Activated B cell treated with CpG ODN at 0.5 μM for 24 hours (primary cell): ENCODE measurements at regions of chr14 and their contacts with region 1.

Region 1: GRCh38 chr14:71103662-71104484 is 196.6 kb downstream of the PCNX1 start:
- DNase-seq: no peak
- ATAC-seq: peak; percentile 73
- H3K4me3 Mint-ChIP-seq: no peak overlapping the region
- H3K27ac Mint-ChIP-seq: no peak overlapping the region
- H3K4me1 Mint-ChIP-seq: no peaks in the 10 kb centered on the region
- H3K27me3 Mint-ChIP-seq: no peaks in the 10 kb centered on the region
- CTCF ChIP-seq: peak; percentile 94

Region 2: DNA sequence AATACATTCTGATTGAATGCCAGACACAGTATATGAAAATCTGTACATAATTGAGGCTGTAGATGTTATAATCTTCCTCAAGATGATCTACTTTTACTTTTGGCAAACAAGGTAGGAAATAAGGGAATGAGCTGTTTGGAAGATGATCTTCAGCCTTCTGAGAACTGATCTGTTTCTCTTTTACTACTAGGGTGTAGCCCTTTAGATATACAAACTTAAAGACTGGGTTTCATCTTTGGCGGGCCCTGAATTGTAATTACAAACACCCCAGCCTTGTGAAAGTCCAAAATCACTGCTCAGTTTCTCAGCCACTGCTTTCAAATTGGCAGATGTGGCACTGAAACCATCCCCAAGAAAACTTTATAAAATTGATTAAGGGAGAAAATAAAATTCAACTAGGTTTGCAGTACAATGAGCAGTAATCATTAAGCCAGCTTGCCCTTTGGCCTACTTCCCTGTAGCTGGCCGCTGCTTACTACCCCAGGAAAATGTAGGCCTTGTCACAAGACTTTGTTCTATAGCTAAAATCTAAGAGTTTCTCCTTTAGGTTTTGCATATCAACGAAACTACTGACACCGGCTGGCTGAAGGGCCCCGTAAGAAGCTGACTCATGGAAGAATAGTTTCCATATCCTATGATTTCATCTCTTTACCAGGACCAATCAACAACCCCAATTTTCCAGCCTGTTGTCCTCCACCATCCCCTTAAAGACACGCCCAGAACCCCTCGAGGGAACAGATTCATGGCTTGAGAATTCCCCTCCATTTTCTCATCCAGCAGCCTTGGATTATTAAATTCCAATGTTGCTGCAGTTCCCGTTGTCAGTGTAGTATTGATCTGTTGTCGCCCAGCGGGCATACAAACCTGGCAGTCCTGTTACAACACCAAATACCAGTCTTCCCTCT is 14.2 kb after region 1 on chr14:
- CTCF ChIA-PET with region 1: interaction called, 12 read pairs
- POLR2A ChIA-PET with region 1: interaction called, 4 read pairs
- intact Hi-C with region 1: no loop called
- DNase-seq: no peak
- ATAC-seq: peak; percentile 59
- H3K4me3 Mint-ChIP-seq: peak overlapping the region; percentile 41
- H3K27ac Mint-ChIP-seq: peak overlapping the region; percentile 93
- H3K4me1 Mint-ChIP-seq: peaks cover 40% of the 10 kb centered on the region
- H3K27me3 Mint-ChIP-seq: no peaks in the 10 kb centered on the region
- CTCF ChIP-seq: no peak

Region 3: GRCh38 chr14:71138448-71139293 is 34.8 kb after region 1 on chr14:
- CTCF ChIA-PET with region 1: interaction called, 25 read pairs
- POLR2A ChIA-PET with region 1: no interaction called
- intact Hi-C with region 1: loop called (anchors 1 kb)
- DNase-seq: peak; percentile 42
- ATAC-seq: peak; percentile 84
- H3K4me3 Mint-ChIP-seq: no peak overlapping the region
- H3K27ac Mint-ChIP-seq: no peak overlapping the region
- H3K4me1 Mint-ChIP-seq: peaks cover 28% of the 10 kb centered on the region
- H3K27me3 Mint-ChIP-seq: no peaks in the 10 kb centered on the region
- CTCF ChIP-seq: peak; percentile 64

Region 4: GRCh38 chr14:71166180-71166790 is 62.4 kb after region 1 on chr14:
- CTCF ChIA-PET with region 1: no interaction called
- POLR2A ChIA-PET with region 1: no interaction called
- intact Hi-C with region 1: no loop called
- DNase-seq: no peak
- ATAC-seq: no peak
- H3K4me3 Mint-ChIP-seq: no peak overlapping the region
- H3K27ac Mint-ChIP-seq: no peak overlapping the region
- H3K4me1 Mint-ChIP-seq: peaks cover 10% of the 10 kb centered on the region
- H3K27me3 Mint-ChIP-seq: peaks cover 17% of the 10 kb centered on the region
- CTCF ChIP-seq: no peak

Region 5: GRCh38 chr14:71753126-71753830 is 649.4 kb after region 1 on chr14:
- CTCF ChIA-PET with region 1: interaction called, 52 read pairs
- POLR2A ChIA-PET with region 1: interaction called, 3 read pairs
- intact Hi-C with region 1: loop called (anchors 1 kb)
- DNase-seq: peak; percentile 61
- ATAC-seq: peak; percentile 45
- H3K4me3 Mint-ChIP-seq: no peak overlapping the region
- H3K27ac Mint-ChIP-seq: no peak overlapping the region
- H3K4me1 Mint-ChIP-seq: peaks cover 3% of the 10 kb centered on the region
- H3K27me3 Mint-ChIP-seq: peaks cover 4% of the 10 kb centered on the region
- CTCF ChIP-seq: peak; percentile 49

Region 6: GRCh38 chr14:71855399-71856036 is 751.6 kb after region 1 on chr14:
- CTCF ChIA-PET with region 1: interaction called, 6 read pairs
- POLR2A ChIA-PET with region 1: no interaction called
- intact Hi-C with region 1: loop called (anchors 10 kb)
- DNase-seq: peak; percentile 36
- ATAC-seq: no peak
- H3K4me3 Mint-ChIP-seq: no peak overlapping the region
- H3K27ac Mint-ChIP-seq: no peak overlapping the region
- H3K4me1 Mint-ChIP-seq: peaks cover 15% of the 10 kb centered on the region
- H3K27me3 Mint-ChIP-seq: peaks cover 13% of the 10 kb centered on the region
- CTCF ChIP-seq: no peak